ENCODE measurements at regions of chr7 and their contacts with region 1.

Region 1: GRCh38 chr7:100570954-100571828 is 2.5 kb downstream of the SAP25 start:
- DNase-seq: peak in 2 of 7 donors; percentile 63
- H3K4me3 ChIP-seq: no peak overlapping the region
- H3K27ac ChIP-seq: peak overlapping the region in 1 of 5 donors; percentile 95
- H3K4me1 ChIP-seq: peaks cover 40 to 43% of the 10 kb centered on the region in 2 donors
- H3K27me3 ChIP-seq: no peaks in the 10 kb centered on the region
- CTCF ChIP-seq: peak in 1 of 6 experiments; percentile 1
- POLR2A ChIP-seq: no peak

Region 2: DNA sequence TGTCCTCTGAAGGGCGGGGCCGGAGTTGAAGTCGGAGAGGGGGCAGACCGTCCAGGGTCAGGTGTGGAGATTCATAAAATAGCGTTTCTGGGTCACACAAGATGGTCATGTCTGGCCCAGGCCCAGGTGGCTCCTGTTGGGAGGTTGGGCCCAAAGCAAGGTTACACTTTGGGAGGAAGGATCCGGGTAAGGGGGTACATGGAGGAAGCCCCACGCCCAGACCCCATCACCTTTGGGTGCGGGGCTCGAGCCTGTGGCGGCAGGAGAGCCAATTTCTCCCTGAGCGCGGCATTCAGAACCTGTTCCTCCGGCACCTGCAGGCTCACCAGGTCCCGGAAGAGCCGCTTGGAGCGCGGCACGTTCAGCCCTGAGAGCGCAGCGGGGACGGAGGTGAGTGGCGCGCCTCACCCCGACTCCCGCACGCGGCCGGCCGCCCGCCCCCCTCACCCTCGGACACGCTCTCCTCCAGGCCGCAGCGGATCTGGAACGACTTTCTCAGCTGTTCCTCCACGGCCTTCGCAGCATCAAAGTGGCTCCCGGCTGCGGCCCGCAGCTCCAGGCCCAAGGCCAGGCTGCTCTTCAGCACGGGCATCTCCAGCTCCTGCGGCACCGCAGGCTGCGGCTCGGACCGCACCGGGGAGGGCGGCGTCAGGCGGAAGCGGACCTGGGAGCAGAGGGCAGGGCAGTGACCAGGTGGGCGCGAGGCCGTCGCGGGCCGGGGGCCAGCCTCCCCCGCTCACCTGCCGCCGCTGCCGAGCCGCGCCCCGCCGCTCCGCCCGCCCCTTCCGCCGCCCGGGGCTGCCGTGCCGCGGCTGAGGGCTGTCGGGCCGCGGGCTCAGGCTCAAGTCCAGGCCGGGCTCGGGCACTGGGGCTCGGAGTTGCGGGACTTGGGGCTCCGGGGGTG is 135.5 kb before region 1 on chr7:
- intact Hi-C with region 1: no loop called
- DNase-seq: peak in 4 of 7 donors; percentile 50 to 68 (median 56)
- H3K4me3 ChIP-seq: peak overlapping the region; percentile 49 to 98 (median 86)
- H3K27ac ChIP-seq: peak overlapping the region; percentile 90 to 98 (median 94)
- H3K4me1 ChIP-seq: peaks cover 28 to 67% of the 10 kb centered on the region in 2 donors
- H3K27me3 ChIP-seq: no peaks in the 10 kb centered on the region
- CTCF ChIP-seq: no peak
- POLR2A ChIP-seq: no peak

Region 3: GRCh38 chr7:100689331-100690135 is 118.3 kb after region 1 on chr7:
- intact Hi-C with region 1: loop called in 1 of 2 experiments (anchors 5 kb)
- DNase-seq: peak in 2 of 7 donors; percentile 23
- H3K4me3 ChIP-seq: no peak overlapping the region
- H3K27ac ChIP-seq: peak overlapping the region in 2 of 5 donors; percentile 44 to 69
- H3K4me1 ChIP-seq: peaks cover 19 to 64% of the 10 kb centered on the region in 2 donors
- H3K27me3 ChIP-seq: no peaks in the 10 kb centered on the region
- CTCF ChIP-seq: no peak
- POLR2A ChIP-seq: no peak

Measured in adrenal gland (tissue), 19 donors.